Heart left ventricle (tissue), 16 donors: ENCODE measurements at regions of chr2 and their contacts with region 1.

Region 1: DNA sequence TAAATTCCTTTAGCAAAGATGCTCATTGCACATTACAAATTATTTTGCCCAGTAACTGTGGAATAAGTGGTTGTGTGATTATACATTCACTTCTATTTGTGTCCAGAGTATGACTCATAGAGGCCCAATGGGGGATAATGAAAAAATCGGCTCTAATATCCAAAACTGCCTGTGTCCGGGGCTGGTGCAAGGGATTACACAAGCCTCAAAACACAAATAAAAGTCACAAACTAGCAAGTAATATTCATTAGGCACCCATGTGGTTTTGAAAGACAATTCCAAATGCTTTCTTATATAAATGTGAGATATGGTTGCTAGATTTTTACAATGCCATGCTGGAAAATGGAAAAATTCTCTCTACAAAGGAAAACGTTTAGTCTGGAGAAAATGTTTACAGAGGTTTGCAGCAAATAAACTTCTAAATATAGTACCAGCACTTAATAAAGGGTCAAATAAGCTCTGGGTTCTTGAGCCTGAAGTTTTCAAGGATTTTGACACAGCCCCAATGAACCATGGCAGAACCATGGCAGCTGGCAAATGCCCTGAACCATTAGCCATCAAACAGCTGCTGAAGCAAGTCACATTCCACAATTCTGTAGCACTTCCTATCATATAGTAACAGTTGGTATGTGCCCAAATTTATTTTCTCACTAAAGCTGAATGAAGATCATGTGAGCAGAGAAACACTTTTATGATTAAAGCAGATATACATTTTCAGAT is 40.5 kb downstream of the IRS1 start:
- DNase-seq: no peak
- ATAC-seq: peak in 3 of 4 donors; percentile 56 to 75 (median 71)
- H3K4me3 ChIP-seq: no peak overlapping the region
- H3K27ac ChIP-seq: peak overlapping the region; percentile 5 to 81 (median 57)
- H3K4me1 ChIP-seq: peaks cover 3 to 79% (median 41%) of the 10 kb centered on the region in 12 donors
- H3K27me3 ChIP-seq: no peaks in the 10 kb centered on the region
- CTCF ChIP-seq: no peak
- POLR2A ChIP-seq: no peak

Region 2: DNA sequence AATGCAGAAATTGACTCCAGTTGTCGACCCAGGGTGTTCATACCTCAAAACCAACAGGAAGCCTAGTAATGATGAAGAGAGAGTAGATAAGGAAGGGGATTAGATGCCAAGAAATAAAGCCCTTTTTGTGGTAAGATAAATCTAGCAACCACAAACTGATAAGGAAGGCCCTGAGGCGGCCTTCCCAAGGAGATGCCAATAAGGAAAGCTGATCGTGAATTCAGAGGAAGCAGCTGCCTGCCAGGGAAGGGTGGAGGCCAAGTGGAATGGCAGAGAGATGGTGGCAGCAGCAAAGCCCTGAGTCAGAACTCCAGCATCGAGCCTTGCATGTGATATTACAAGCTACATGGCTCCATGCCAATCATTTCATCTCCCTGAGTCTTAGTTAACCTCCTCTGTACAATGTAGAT is 85.8 kb before region 1 on chr2:
- intact Hi-C with region 1: no loop called
- DNase-seq: peak in 1 of 5 donors; percentile 43
- ATAC-seq: peak in 3 of 4 donors; percentile 29 to 74 (median 61)
- H3K4me3 ChIP-seq: no peak overlapping the region
- H3K27ac ChIP-seq: peak overlapping the region in 11 of 12 donors; percentile 20 to 80 (median 55)
- H3K4me1 ChIP-seq: peaks cover 0 to 39% (median 20%) of the 10 kb centered on the region in 12 donors
- H3K27me3 ChIP-seq: no peaks in the 10 kb centered on the region
- CTCF ChIP-seq: no peak
- POLR2A ChIP-seq: no peak

Region 3: GRCh38 chr2:226742347-226742746 is 16.7 kb before region 1 on chr2:
- intact Hi-C with region 1: loop called in 1 of 10 experiments (anchors 2 kb)
- DNase-seq: peak in 4 of 5 donors; percentile 61 to 73 (median 64)
- ATAC-seq: peak; percentile 84 to 92 (median 89)
- H3K4me3 ChIP-seq: no peak overlapping the region
- H3K27ac ChIP-seq: peak overlapping the region; percentile 58 to 88 (median 74)
- H3K4me1 ChIP-seq: peaks cover 8 to 77% (median 41%) of the 10 kb centered on the region in 12 donors
- H3K27me3 ChIP-seq: no peaks in the 10 kb centered on the region
- CTCF ChIP-seq: no peak
- POLR2A ChIP-seq: no peak

Region 4: GRCh38 chr2:226771067-226771466 is 12.0 kb after region 1 on chr2:
- intact Hi-C with region 1: loop called in 1 of 10 experiments (anchors 2 kb)
- DNase-seq: peak in 3 of 5 donors; percentile 38 to 68 (median 58)
- ATAC-seq: peak; percentile 71 to 87 (median 76)
- H3K4me3 ChIP-seq: no peak overlapping the region
- H3K27ac ChIP-seq: peak overlapping the region; percentile 2 to 84 (median 72)
- H3K4me1 ChIP-seq: peaks cover 0 to 69% (median 40%) of the 10 kb centered on the region in 12 donors
- H3K27me3 ChIP-seq: no peaks in the 10 kb centered on the region
- CTCF ChIP-seq: no peak
- POLR2A ChIP-seq: no peak